ENCODE measurements at regions of chr16 and their contacts with region 1.

Region 1: GRCh38 chr16:57167953-57168352 is 17.9 kb downstream of the PSME3IP1 start:
- DNase-seq: no peak
- ATAC-seq: peak; percentile 60 to 73 (median 68)
- H3K4me3 ChIP-seq: no peak overlapping the region
- H3K27ac ChIP-seq: no peak overlapping the region
- H3K4me1 ChIP-seq: peaks cover 0 to 17% (median 5%) of the 10 kb centered on the region in 4 donors
- H3K27me3 ChIP-seq: no peaks in the 10 kb centered on the region
- CTCF ChIP-seq: peak; percentile 42 to 55 (median 48)
- POLR2A ChIP-seq: no peak

Region 2: DNA sequence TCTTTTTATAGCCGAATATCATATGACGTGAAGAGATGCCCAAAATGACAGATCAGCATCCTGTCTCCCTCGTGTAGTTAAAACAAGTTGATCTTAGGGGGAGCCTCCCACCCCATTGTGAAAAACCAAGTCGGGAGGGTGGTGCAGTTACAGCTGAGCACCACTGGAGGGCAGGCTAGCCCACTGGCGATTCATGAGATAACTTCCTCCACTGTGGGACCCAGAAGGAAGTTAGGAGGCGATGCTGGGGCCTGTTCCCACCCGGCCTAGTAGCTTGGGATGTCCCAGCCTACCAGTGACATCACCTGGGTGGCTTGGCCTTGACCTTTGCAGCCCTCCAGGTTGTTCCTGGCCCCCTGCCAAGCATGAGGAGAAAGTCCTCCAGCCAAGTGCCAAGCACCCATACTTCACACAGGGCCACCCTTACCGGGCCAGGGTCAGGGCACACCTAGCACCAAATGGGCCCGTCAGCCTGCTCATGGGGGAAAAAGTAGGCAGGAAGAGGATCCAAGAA is 83.6 kb before region 1 on chr16:
- intact Hi-C with region 1: loop called in 1 of 2 experiments (anchors 10 kb)
- DNase-seq: peak; percentile 60 to 81 (median 77)
- ATAC-seq: peak; percentile 85 to 94 (median 90)
- H3K4me3 ChIP-seq: no peak overlapping the region
- H3K27ac ChIP-seq: no peak overlapping the region
- H3K4me1 ChIP-seq: peaks cover 0 to 9% (median 2%) of the 10 kb centered on the region in 4 donors
- H3K27me3 ChIP-seq: no peaks in the 10 kb centered on the region
- CTCF ChIP-seq: peak; percentile 87 to 98 (median 95)
- POLR2A ChIP-seq: no peak

Region 3: DNA sequence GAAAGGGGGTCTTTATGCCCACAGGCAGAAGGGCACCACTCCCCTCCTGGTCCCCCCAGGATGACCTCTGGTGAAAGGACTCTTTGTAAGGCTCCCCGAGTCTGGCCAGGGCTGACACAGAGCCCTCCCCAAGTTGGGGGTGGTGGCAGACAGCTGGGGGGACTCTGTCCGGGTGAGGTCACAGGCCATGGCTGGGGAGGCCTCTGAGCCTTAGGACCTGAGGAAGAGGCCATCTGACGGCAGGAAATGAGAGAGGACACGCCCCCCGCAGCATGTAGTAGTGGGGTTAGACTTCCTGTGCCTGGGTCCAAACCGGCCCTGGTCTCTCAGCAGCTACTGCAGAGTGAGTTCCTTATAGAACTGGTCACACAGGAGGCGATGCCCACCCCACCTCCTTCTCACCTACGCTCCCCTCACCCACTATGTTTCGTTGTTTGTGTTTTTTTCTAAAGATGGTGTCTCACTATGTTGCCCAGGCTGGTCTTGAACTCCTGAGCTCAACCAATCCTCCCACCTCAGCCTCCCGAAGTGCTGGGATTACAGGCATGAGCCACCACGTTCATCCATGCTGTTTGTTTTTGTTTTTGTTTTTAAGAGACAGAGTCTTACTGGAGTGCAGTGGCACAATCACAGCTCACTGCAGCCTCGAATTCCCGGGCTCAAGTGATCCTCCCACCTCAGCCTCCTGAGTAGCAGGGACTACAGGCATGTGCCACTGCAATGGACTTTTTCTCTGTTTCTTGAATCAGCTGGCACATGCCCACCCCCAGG is 927.4 kb after region 1 on chr16:
- intact Hi-C with region 1: no loop called
- DNase-seq: peak in 1 of 3 donors; percentile 48
- ATAC-seq: peak in 3 of 4 donors; percentile 13 to 44 (median 42)
- H3K4me3 ChIP-seq: no peak overlapping the region
- H3K27ac ChIP-seq: no peak overlapping the region
- H3K4me1 ChIP-seq: no peaks in the 10 kb centered on the region
- H3K27me3 ChIP-seq: no peaks in the 10 kb centered on the region
- CTCF ChIP-seq: no peak
- POLR2A ChIP-seq: no peak